ENCODE measurements at regions of chr1 and their contacts with region 1.

Region 1: GRCh38 chr1:204072931-204073836 is at the start of gene SOX13:
- DNase-seq: peak; percentile 83
- total RNA-seq, gene SOX13: 17.9 TPM

Region 2: DNA sequence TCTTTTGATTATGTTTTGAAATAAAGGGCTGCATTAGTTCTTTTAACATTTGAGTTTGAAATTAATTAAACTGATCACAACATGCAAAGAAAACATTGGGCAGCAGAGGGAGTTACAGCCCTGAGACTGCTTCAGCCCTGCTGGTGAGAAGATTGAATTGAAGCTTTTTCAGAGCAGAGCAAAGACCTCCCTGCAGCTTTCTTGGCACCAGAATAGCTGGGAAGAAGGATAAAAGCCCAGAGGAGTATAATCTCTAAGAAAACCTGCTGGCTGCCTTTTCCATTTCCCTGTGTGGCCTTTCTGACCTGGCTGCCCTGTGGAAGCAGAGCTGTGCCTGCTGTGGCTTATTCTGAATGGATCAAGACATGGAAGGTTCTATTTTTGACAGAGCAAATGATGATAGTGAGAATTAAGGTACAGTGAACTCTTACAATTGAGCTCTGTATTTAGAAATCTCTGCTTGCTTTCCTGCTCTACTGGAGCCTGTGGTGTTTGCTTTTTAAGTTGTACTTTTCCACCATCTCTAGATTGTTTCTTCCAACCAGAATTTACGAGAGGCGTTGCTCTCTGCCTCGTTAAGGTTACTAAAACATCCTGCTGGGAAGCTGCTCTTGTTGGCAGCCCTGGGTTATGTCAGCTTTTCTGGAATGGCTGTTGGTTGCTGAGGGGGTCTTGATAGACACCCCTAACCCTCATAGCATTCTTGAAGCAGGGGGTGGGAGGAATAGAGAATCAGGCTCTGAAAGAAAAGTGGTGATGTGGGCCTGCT is 201.9 kb before region 1 on chr1:
- intact Hi-C with region 1: loop called (anchors 5 kb)
- DNase-seq: no peak

Region 3: DNA sequence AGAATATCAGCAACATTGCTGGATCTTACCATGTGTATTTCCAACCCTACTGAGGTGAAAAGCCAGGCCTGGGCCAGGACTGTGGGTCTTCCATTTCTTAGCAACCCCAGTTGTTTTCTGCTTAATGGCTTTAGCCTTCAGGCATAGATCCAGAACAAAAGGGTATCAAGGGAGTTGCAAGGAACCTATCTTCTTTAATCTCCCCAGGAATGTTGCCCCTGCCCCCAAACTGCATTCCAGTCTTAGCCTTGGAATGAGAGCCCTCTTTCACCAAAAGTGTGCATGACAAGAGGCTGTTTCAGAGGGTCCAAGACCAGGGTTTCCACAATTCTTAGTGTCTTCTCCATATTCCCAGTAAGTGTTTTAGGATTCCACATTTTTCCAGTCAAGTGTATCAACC is 88.1 kb before region 1 on chr1:
- intact Hi-C with region 1: no loop called
- DNase-seq: no peak